Activated T-helper 2 cell treated with anti-CD3 and anti-CD28 coated beads, Interferon-gamma antibody, Interleukin-2, Interleukin-4, amounts not matched to agents 10 μg/mL and 5 μg/mL and 100 μg/mL, durations not matched to agents 14 hours and 24 hours and 36 hours (primary cell): ENCODE measurements at regions of chr9 and their contacts with region 1.

Region 1: GRCh38 chr9:33320568-33321261 is 30.4 kb downstream of the NFX1 start:
- DNase-seq: no peak
- H3K4me3 Mint-ChIP-seq: no peak overlapping the region
- H3K27ac Mint-ChIP-seq: peak overlapping the region; percentile 69
- H3K4me1 Mint-ChIP-seq: peaks cover 11% of the 10 kb centered on the region
- H3K27me3 Mint-ChIP-seq: no peaks in the 10 kb centered on the region

Region 2: DNA sequence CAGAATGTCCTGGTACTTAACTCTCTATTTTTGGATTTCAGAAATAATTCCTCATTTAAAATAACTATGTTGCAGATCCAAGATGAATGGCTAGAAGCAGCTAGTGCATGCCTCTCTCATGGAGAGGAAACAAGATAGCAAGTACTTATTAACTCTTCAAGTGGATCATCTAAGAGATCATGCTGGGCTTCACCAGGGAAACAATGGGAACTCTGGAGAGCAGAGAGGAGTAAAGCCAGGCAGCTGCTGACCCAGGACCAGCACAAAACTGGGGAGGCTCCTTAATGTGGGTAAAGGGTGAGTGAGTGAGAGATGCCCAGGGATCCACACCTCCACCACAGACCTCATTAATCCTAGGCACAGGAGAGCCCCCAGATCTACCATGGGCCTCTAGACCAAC is 1834.1 kb before region 1 on chr9:
- intact Hi-C with region 1: no loop called
- DNase-seq: no peak
- H3K4me3 Mint-ChIP-seq: no peak overlapping the region
- H3K27ac Mint-ChIP-seq: no peak overlapping the region
- H3K4me1 Mint-ChIP-seq: no peaks in the 10 kb centered on the region
- H3K27me3 Mint-ChIP-seq: no peaks in the 10 kb centered on the region

Region 3: DNA sequence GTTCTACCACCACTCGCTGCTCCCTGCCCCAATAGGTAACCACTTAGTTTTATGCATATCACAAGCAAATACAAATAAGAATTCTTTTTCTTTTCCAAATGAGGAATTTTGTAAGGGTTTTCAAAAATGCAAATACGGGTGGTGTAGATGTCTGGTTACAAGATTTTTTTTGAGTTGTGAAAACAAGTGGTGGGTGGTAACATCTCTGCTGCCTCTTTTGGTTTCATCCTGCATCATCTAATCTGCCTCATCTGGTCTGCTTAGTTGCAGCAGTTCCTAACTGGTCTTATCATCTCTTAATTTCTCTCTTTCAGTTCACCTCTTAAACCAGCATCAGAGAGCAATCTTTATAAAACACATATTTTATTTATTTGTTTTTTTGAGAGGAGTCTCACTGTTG is 25.1 kb before region 1 on chr9:
- intact Hi-C with region 1: loop called (anchors 1 kb)
- DNase-seq: no peak
- H3K4me3 Mint-ChIP-seq: peak overlapping the region; percentile 53
- H3K27ac Mint-ChIP-seq: peak overlapping the region; percentile 81
- H3K4me1 Mint-ChIP-seq: peaks cover 71% of the 10 kb centered on the region
- H3K27me3 Mint-ChIP-seq: no peaks in the 10 kb centered on the region